ENCODE measurements at regions of chr5 and their contacts with region 1.

Region 1: GRCh38 chr5:150217873-150218692 is 28.2 kb downstream of the SLC6A7 start:
- DNase-seq: peak; percentile 68 to 91 (median 83)
- ATAC-seq: peak; percentile 97
- H3K4me3 ChIP-seq: no peak overlapping the region
- H3K4me3 Mint-ChIP-seq: no peak overlapping the region
- H3K27ac ChIP-seq: no peak overlapping the region
- H3K27ac Mint-ChIP-seq: no peak overlapping the region
- H3K4me1 ChIP-seq: no peaks in the 10 kb centered on the region
- H3K4me1 Mint-ChIP-seq: peaks cover 2% of the 10 kb centered on the region
- H3K27me3 ChIP-seq: no peaks in the 10 kb centered on the region
- H3K27me3 Mint-ChIP-seq: peaks cover 3% of the 10 kb centered on the region
- CTCF ChIP-seq: peak; percentile 82

Region 2: DNA sequence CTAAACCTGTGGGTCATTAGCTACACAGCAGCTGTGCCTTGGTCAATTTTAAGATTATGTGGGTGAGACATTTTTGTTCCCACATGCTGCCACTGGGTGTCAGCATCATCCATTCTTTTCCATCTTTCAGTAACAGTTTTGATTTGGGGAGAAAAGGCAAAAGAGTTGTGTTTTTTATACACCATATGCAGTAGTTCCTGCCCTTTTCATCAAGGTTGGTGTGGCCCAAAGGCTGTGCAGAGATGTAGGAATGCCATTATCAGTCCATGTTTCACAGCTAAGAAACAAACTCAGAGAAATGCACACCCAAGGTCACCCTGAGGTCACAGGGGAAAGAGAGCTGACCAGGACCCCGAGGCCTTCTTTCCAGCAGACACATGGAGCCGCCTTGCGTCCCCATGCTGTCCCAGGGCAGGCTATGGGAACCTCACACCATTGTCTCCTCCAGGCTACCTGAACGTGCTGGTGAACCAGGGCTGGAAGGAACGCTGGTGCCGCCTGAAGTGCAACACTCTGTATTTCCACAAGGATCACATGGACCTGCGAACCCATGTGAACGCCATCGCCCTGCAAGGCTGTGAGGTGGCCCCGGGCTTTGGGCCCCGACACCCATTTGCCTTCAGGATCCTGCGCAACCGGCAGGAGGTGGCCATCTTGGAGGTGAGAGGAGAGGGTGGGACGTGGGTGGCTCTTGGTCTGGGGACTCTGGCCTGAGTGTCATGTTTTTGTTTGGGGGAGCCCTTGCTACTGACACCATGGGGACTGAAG is 900.6 kb before region 1 on chr5:
- CTCF ChIA-PET with region 1: no interaction called
- POLR2A ChIA-PET with region 1: no interaction called
- intact Hi-C with region 1: no loop called
- DNase-seq: peak in 7 of 9 experiments; percentile 14 to 71 (median 38)
- ATAC-seq: peak; percentile 69
- H3K4me3 ChIP-seq: no peak overlapping the region
- H3K4me3 Mint-ChIP-seq: no peak overlapping the region
- H3K27ac ChIP-seq: no peak overlapping the region
- H3K27ac Mint-ChIP-seq: no peak overlapping the region
- H3K4me1 ChIP-seq: no peaks in the 10 kb centered on the region
- H3K4me1 Mint-ChIP-seq: peaks cover 3% of the 10 kb centered on the region
- H3K27me3 ChIP-seq: no peaks in the 10 kb centered on the region
- H3K27me3 Mint-ChIP-seq: no peaks in the 10 kb centered on the region
- CTCF ChIP-seq: peak; percentile 90

Region 3: DNA sequence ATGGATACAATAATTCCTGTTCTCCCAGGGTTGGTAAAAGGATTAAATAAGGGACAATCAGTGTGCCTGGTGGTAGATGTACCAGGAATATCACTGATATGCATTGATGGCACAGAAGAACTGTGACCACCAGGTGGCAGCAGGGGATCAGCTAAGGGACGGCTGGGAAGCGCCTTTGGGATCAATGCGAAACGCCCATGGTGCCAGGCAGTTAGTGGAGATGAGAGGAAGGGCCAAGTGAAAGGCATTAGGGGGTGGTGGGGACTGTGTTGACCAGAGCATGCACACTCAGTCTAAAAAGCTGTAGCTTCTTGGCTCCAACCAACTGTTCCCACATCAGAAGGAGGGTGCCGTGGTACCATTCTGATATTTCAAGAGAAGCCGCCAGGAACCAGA is 581.2 kb before region 1 on chr5:
- CTCF ChIA-PET with region 1: no interaction called
- POLR2A ChIA-PET with region 1: no interaction called
- intact Hi-C with region 1: loop called (anchors 2 to 5 kb)
- DNase-seq: peak in 5 of 9 experiments; percentile 52 to 79 (median 75)
- ATAC-seq: peak; percentile 67
- H3K4me3 ChIP-seq: no peak overlapping the region
- H3K4me3 Mint-ChIP-seq: no peak overlapping the region
- H3K27ac ChIP-seq: no peak overlapping the region
- H3K27ac Mint-ChIP-seq: no peak overlapping the region
- H3K4me1 ChIP-seq: no peaks in the 10 kb centered on the region
- H3K4me1 Mint-ChIP-seq: no peaks in the 10 kb centered on the region
- H3K27me3 ChIP-seq: no peaks in the 10 kb centered on the region
- H3K27me3 Mint-ChIP-seq: no peaks in the 10 kb centered on the region
- CTCF ChIP-seq: peak; percentile 86

Region 4: DNA sequence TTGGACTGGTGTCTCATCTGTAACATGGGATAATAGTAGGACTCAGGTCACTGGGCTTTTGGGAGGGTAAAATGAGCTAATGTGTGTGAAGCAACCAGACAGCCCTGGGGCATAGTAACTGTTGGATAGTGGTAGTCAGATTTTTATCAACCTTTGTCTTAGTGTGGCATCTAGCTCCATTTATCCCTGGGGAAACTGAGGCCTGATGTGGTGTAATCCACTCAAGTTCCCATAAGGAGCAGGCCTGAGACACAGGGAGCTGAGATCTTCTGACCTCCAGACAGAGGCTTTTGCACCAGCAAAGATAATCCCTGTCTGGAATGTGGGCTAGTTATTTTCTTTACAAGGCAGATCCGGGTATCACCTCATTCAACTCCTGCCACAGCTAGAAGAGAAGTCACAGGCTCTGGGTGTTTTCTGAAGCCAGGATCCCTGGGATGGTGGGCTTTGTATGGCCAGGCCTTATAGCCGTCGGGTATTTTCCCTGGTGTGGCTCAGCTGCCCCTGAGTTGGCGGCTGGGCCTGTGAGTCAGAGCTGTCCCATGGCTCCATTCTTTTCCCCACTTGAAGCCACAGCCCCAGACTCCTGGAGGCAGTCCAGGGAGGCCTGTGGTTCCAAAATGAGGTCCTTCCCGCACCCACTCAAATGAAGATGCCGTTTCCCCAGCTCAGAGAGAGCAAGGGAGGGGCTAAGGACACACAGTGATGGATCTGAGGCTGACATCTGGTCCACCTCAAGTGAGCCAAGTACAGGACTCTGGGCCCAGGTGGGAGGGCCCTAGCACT is 105.6 kb before region 1 on chr5:
- CTCF ChIA-PET with region 1: no interaction called
- POLR2A ChIA-PET with region 1: no interaction called
- intact Hi-C with region 1: no loop called
- DNase-seq: peak in 1 of 9 experiments; percentile 6
- ATAC-seq: no peak
- H3K4me3 ChIP-seq: no peak overlapping the region
- H3K4me3 Mint-ChIP-seq: no peak overlapping the region
- H3K27ac ChIP-seq: no peak overlapping the region
- H3K27ac Mint-ChIP-seq: no peak overlapping the region
- H3K4me1 ChIP-seq: no peaks in the 10 kb centered on the region
- H3K4me1 Mint-ChIP-seq: no peaks in the 10 kb centered on the region
- H3K27me3 ChIP-seq: no peaks in the 10 kb centered on the region
- H3K27me3 Mint-ChIP-seq: peaks cover 3% of the 10 kb centered on the region
- CTCF ChIP-seq: no peak

Region 5: GRCh38 chr5:150129813-150130492 is 88.1 kb before region 1 on chr5:
- CTCF ChIA-PET with region 1: interaction called, 18 read pairs
- POLR2A ChIA-PET with region 1: no interaction called
- intact Hi-C with region 1: loop called (anchors 1 kb)
- DNase-seq: peak in 8 of 9 experiments; percentile 13 to 61 (median 46)
- ATAC-seq: peak; percentile 52
- H3K4me3 ChIP-seq: no peak overlapping the region
- H3K4me3 Mint-ChIP-seq: no peak overlapping the region
- H3K27ac ChIP-seq: no peak overlapping the region
- H3K27ac Mint-ChIP-seq: no peak overlapping the region
- H3K4me1 ChIP-seq: no peaks in the 10 kb centered on the region
- H3K4me1 Mint-ChIP-seq: no peaks in the 10 kb centered on the region
- H3K27me3 ChIP-seq: no peaks in the 10 kb centered on the region
- H3K27me3 Mint-ChIP-seq: no peaks in the 10 kb centered on the region
- CTCF ChIP-seq: peak; percentile 67

Region 6: GRCh38 chr5:150175076-150175935 is 42.8 kb before region 1 on chr5:
- CTCF ChIA-PET with region 1: interaction called, 14 read pairs
- POLR2A ChIA-PET with region 1: no interaction called
- intact Hi-C with region 1: no loop called
- DNase-seq: no peak
- ATAC-seq: no peak
- H3K4me3 ChIP-seq: no peak overlapping the region
- H3K4me3 Mint-ChIP-seq: no peak overlapping the region
- H3K27ac ChIP-seq: no peak overlapping the region
- H3K27ac Mint-ChIP-seq: no peak overlapping the region
- H3K4me1 ChIP-seq: no peaks in the 10 kb centered on the region
- H3K4me1 Mint-ChIP-seq: no peaks in the 10 kb centered on the region
- H3K27me3 ChIP-seq: no peaks in the 10 kb centered on the region
- H3K27me3 Mint-ChIP-seq: peaks cover 28% of the 10 kb centered on the region
- CTCF ChIP-seq: no peak

Region 7: GRCh38 chr5:150436141-150436680 is 218.1 kb after region 1 on chr5:
- CTCF ChIA-PET with region 1: no interaction called
- POLR2A ChIA-PET with region 1: no interaction called
- intact Hi-C with region 1: loop called (anchors 2 to 5 kb)
- DNase-seq: peak; percentile 84 to 96 (median 92)
- ATAC-seq: peak; percentile 98
- H3K4me3 ChIP-seq: no peak overlapping the region
- H3K4me3 Mint-ChIP-seq: peak overlapping the region; percentile 50
- H3K27ac ChIP-seq: no peak overlapping the region
- H3K27ac Mint-ChIP-seq: peak overlapping the region; percentile 74
- H3K4me1 ChIP-seq: no peaks in the 10 kb centered on the region
- H3K4me1 Mint-ChIP-seq: peaks cover 7% of the 10 kb centered on the region
- H3K27me3 ChIP-seq: no peaks in the 10 kb centered on the region
- H3K27me3 Mint-ChIP-seq: no peaks in the 10 kb centered on the region
- CTCF ChIP-seq: peak; percentile 74

Measured in CD8-positive, alpha-beta T cell (primary cell).